Left ventricle myocardium inferior (tissue), 1 donor: ENCODE measurements at regions of chr10 and their contacts with region 1.

Region 1: GRCh38 chr10:97869091-97870042 is 19.7 kb downstream of the GOLGA7B start:
- DNase-seq: peak; percentile 74
- H3K4me3 ChIP-seq: no peak overlapping the region
- H3K27ac ChIP-seq: no peak overlapping the region
- H3K4me1 ChIP-seq: peaks cover 10% of the 10 kb centered on the region
- H3K27me3 ChIP-seq: peaks cover 61% of the 10 kb centered on the region
- CTCF ChIP-seq: peak; percentile 86

Region 2: GRCh38 chr10:97759158-97759887 is 110.0 kb before region 1 on chr10:
- intact Hi-C with region 1: loop called (anchors 10 kb)
- DNase-seq: peak; percentile 60
- H3K4me3 ChIP-seq: no peak overlapping the region
- H3K27ac ChIP-seq: no peak overlapping the region
- H3K4me1 ChIP-seq: peaks cover 13% of the 10 kb centered on the region
- H3K27me3 ChIP-seq: no peaks in the 10 kb centered on the region
- CTCF ChIP-seq: peak; percentile 89

Region 3: GRCh38 chr10:97796651-97797050 is 72.7 kb before region 1 on chr10:
- intact Hi-C with region 1: loop called (anchors 5 kb)
- DNase-seq: no peak
- H3K4me3 ChIP-seq: no peak overlapping the region
- H3K27ac ChIP-seq: no peak overlapping the region
- H3K4me1 ChIP-seq: peaks cover 3% of the 10 kb centered on the region
- H3K27me3 ChIP-seq: peaks cover 49% of the 10 kb centered on the region
- CTCF ChIP-seq: no peak

Region 4: DNA sequence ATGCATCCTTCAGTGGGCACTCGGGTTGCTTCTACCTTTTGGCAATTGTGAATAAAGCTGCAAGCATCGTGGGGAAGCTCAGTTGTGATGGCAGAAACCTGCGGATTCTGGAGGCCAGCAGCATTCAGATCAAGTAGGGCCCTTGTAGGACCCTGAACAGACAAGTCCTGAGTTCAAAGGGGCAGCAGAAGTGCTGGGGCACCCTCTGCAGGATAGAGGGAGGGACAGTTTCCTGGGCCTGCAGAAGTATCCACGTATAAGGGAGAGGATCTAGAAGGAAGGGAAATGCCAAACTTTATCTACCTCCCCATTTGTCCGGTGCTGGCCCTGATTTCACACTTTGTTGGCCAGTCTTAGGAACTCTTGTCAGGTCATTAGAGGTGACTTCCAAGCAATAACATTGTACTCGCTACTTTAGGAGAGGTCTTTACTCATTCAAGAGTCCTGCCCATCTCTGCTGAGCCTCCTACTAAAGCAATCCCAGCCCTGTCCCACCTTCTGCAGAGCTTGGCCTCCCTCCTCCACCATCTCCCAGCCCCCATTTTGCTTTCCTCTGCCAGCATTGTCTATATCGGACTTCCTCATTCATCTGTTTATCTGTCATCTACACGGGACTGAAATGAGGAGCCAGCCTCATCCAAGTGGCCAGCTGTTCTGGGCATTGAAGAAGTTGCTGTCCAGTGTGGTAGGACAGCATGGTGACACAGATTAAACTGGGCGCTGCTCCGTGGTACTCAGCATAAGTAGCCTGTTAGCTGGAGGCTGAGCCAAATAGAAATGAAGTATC is 238.5 kb after region 1 on chr10:
- intact Hi-C with region 1: no loop called
- DNase-seq: no peak
- H3K4me3 ChIP-seq: no peak overlapping the region
- H3K27ac ChIP-seq: no peak overlapping the region
- H3K4me1 ChIP-seq: no peaks in the 10 kb centered on the region
- H3K27me3 ChIP-seq: peaks cover 52% of the 10 kb centered on the region
- CTCF ChIP-seq: no peak